Activated CD4-positive, alpha-beta memory T cell treated with anti-CD3 and anti-CD28 coated beads for 36 hours (primary cell): ENCODE measurements at regions of chr12 and their contacts with region 1.

Region 1: GRCh38 chr12:47636908-47637780 is 68.7 kb downstream of the RPAP3 start:
- DNase-seq: peak; percentile 71
- H3K4me3 Mint-ChIP-seq: no peak overlapping the region
- H3K27ac Mint-ChIP-seq: peak overlapping the region; percentile 18
- H3K4me1 Mint-ChIP-seq: peaks cover 6% of the 10 kb centered on the region
- H3K27me3 Mint-ChIP-seq: no peaks in the 10 kb centered on the region

Region 2: DNA sequence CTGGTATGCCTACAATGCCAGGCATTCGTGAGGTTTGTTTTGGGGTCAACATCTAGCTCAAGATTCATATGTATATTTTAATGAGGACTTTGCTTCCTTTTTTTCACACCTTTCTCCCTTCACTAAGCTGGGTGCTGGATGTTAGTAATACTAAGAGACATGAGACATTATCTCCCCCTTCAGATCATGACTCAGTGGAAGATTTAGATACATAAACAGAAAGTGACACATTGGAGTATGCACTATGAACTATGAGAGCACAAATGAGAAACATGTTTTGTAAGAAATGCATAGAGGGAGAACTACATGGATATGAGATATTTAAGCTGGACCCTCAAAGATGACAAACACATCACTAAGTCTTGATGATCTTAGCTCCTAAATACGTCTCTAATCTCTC is 217.6 kb before region 1 on chr12:
- CTCF ChIA-PET with region 1: interaction called, 4 read pairs
- POLR2A ChIA-PET with region 1: no interaction called
- intact Hi-C with region 1: loop called (anchors 1 kb)
- DNase-seq: no peak
- H3K4me3 Mint-ChIP-seq: no peak overlapping the region
- H3K27ac Mint-ChIP-seq: peak overlapping the region; percentile 60
- H3K4me1 Mint-ChIP-seq: peaks cover 39% of the 10 kb centered on the region
- H3K27me3 Mint-ChIP-seq: no peaks in the 10 kb centered on the region

Region 3: GRCh38 chr12:47616440-47616839 is 20.7 kb before region 1 on chr12:
- CTCF ChIA-PET with region 1: interaction called, 10 read pairs
- POLR2A ChIA-PET with region 1: no interaction called
- intact Hi-C with region 1: no loop called
- DNase-seq: no peak
- H3K4me3 Mint-ChIP-seq: no peak overlapping the region
- H3K27ac Mint-ChIP-seq: no peak overlapping the region
- H3K4me1 Mint-ChIP-seq: no peaks in the 10 kb centered on the region
- H3K27me3 Mint-ChIP-seq: no peaks in the 10 kb centered on the region

Region 4: DNA sequence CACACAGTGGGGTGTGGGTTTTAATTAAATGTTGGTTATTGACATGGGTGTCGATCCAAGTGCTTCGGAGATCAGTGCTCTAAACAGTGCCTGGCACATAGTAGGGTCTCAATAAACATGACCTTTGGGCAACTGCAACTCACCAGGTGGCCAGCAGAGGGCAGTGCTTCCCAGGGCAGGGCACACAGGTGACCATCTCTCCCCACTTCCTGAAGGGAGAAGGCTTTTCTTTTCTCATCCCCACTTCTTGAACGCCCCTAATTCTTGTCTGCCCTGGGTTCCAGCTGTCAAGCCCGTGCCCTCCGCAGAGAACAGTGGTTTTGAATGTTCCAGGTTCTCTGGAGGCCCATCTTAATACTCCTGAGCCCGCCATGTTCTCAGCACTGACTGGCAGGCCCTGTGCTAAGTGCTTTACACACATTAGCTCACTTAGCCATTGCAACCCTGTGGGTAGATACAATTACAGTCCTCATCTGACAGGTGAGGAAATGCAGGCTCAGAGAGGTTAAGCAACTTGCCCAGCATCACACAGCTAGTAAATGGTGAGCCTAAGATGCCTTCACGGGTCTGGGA is 105.2 kb after region 1 on chr12:
- CTCF ChIA-PET with region 1: no interaction called
- POLR2A ChIA-PET with region 1: no interaction called
- intact Hi-C with region 1: no loop called
- DNase-seq: peak; percentile 85
- H3K4me3 Mint-ChIP-seq: no peak overlapping the region
- H3K27ac Mint-ChIP-seq: no peak overlapping the region
- H3K4me1 Mint-ChIP-seq: peaks cover 29% of the 10 kb centered on the region
- H3K27me3 Mint-ChIP-seq: no peaks in the 10 kb centered on the region